Sigmoid colon (tissue), 7 donors: ENCODE measurements at regions of chr2 and their contacts with region 1.

Region 1: GRCh38 chr2:144516981-144517865 is 2.7 kb downstream of the ZEB2 start:
- DNase-seq: peak; percentile 84
- H3K4me3 ChIP-seq: peak overlapping the region; percentile 56 to 75 (median 63)
- H3K27ac ChIP-seq: peak overlapping the region; percentile 81 to 86 (median 86)
- H3K4me1 ChIP-seq: peaks cover 0 to 26% (median 20%) of the 10 kb centered on the region in 4 donors
- H3K27me3 ChIP-seq: peaks cover 18 to 81% (median 38%) of the 10 kb centered on the region in 3 donors
- CTCF ChIP-seq: no peak
- EP300 ChIP-seq: no peak
- POLR2A ChIP-seq: no peak

Region 2: GRCh38 chr2:144332356-144333142 is 184.7 kb before region 1 on chr2:
- intact Hi-C with region 1: loop called (anchors 5 kb)
- DNase-seq: peak; percentile 90
- H3K4me3 ChIP-seq: peak overlapping the region; percentile 69 to 84 (median 76)
- H3K27ac ChIP-seq: peak overlapping the region; percentile 82 to 88 (median 84)
- H3K4me1 ChIP-seq: peaks cover 0 to 14% (median 12%) of the 10 kb centered on the region in 4 donors
- H3K27me3 ChIP-seq: no peaks in the 10 kb centered on the region
- CTCF ChIP-seq: no peak
- EP300 ChIP-seq: no peak
- POLR2A ChIP-seq: no peak

Region 3: GRCh38 chr2:144937910-144938709 is 420.9 kb after region 1 on chr2:
- intact Hi-C with region 1: loop called (anchors 10 kb)
- DNase-seq: no peak
- H3K4me3 ChIP-seq: no peak overlapping the region
- H3K27ac ChIP-seq: peak overlapping the region; percentile 49 to 69 (median 54)
- H3K4me1 ChIP-seq: peaks cover 0 to 21% (median 14%) of the 10 kb centered on the region in 4 donors
- H3K27me3 ChIP-seq: no peaks in the 10 kb centered on the region
- CTCF ChIP-seq: no peak
- EP300 ChIP-seq: no peak
- POLR2A ChIP-seq: no peak

Region 4: GRCh38 chr2:145186303-145186702 is 669.1 kb after region 1 on chr2:
- intact Hi-C with region 1: no loop called
- DNase-seq: peak; percentile 69
- H3K4me3 ChIP-seq: no peak overlapping the region
- H3K27ac ChIP-seq: no peak overlapping the region
- H3K4me1 ChIP-seq: no peaks in the 10 kb centered on the region
- H3K27me3 ChIP-seq: no peaks in the 10 kb centered on the region
- CTCF ChIP-seq: no peak
- EP300 ChIP-seq: no peak
- POLR2A ChIP-seq: no peak